Activated naive CD4-positive, alpha-beta T cell treated with anti-CD3 and anti-CD28 coated beads for 36 hours (primary cell): ENCODE measurements at regions of chr11 and their contacts with region 1.

Region 1: DNA sequence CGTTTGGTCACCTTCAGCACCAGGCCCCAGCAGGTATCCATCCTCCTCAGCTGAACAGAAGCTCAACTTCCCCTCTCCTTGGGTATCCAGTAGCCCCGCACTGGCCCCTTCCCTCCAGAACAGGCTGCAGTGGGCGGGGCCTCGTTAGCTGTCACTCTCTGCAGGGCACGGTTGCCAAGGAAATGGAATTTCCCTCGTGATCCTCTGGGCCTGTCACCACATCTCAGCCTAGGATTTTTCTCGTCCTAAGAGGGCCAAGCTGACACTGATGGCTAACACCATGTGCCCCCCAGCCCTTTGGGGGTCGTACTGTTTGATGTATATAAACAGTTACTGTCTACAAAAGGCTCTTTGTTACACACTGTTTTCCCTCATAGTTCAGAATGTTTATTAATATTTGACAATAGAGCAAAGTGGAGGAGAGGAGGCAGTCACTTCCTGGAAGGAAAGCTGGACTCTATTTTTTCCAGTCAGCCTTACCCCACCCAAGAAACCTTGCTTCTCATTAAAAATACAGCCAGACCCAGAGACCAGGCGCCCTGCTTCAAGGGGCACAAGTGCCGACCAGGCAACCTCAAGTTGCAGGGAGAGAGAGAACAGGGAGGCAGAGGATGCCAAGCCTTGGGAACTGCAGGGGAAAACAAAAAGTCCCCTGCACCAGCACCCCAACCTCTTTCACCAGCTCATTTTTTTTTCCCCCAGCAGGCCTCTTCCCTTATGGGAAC is 44.5 kb downstream of the FEZ1 start:
- DNase-seq: peak; percentile 49
- H3K4me3 Mint-ChIP-seq: no peak overlapping the region
- H3K27ac Mint-ChIP-seq: no peak overlapping the region
- H3K4me1 Mint-ChIP-seq: peaks cover 10% of the 10 kb centered on the region
- H3K27me3 Mint-ChIP-seq: no peaks in the 10 kb centered on the region

Region 2: DNA sequence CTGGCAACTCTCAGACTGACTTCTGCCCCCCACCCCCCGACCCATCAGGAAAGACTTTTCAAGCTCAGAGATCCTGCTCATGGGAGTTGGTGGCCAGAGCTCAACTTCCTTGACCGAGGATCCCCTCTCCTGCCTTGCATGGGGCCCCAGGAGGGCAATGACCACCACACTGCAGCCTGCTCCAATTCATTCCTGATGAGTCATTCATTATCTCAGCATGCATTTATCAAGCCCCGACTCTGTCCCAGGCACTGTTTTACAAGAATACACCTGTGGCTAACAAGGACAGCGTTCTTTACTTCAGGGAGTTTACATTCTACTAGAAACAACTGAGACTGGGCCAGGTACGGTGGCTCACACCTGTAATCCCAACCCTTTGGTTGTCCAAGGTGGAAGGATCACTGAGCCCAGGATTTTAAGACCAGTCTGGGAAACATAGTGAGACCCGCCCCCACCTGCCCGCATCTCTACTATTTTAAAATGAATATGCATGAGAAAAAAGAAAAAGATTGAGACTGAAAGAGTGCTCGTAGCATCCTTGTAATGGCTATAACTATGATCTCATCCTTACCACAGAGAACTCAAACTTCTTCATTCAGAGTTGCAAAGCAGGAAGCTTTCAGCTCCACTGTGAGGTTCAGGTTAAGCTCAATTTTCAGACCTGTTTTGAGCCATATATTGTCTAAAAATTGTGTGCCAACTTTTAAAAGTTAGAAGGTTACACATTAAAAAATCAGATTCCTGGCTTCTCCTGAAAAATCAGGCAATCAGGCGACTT is 15.9 kb before region 1 on chr11:
- CTCF ChIA-PET with region 1: interaction called, 13 read pairs
- intact Hi-C with region 1: no loop called
- DNase-seq: no peak
- H3K4me3 Mint-ChIP-seq: no peak overlapping the region
- H3K27ac Mint-ChIP-seq: no peak overlapping the region
- H3K4me1 Mint-ChIP-seq: peaks cover 5% of the 10 kb centered on the region
- H3K27me3 Mint-ChIP-seq: peaks cover 23% of the 10 kb centered on the region